Heart left ventricle (tissue), 16 donors: ENCODE measurements at regions of chr16 and their contacts with region 1.

Region 1: DNA sequence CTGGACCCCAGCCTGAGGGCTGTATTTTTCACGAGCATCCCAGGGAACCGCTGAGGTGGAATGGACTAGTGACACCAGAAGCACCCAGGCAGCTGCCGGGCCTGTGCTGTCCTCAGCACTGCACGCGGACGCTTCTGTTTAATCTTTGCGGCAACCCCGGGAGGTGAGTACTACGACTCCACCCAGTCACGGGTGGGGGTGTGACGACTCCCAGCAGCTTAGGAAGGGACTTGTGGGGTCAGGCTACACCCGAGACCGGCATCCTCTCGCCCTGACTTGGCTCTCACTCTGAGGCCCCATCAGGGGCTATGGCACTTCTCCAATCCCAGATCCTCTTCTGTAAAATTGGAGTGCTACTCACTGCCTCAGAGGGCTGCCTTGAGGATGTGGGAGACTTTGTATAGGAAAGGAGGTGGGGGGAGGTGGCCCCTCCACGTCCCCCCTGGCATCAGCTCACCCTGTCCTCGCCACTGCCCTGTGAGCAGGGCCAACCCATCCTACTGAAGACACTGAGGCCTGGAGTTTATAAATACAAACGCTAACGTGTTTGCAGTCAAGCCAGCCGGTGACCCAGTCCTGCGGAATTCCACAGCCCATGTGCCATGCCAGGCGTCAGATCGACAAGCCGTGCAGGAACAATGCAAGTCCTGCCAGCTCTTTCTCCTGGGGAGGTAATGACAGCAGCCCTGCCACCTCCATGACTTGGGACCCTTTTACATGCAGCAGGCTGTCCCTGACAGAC is 44.4 kb downstream of the PPL start:
- DNase-seq: peak in 4 of 5 donors; percentile 40 to 74 (median 64)
- ATAC-seq: peak; percentile 64 to 82 (median 69)
- H3K4me3 ChIP-seq: no peak overlapping the region
- H3K27ac ChIP-seq: peak overlapping the region in 8 of 12 donors; percentile 13 to 73 (median 52)
- H3K4me1 ChIP-seq: peaks cover 0 to 19% (median 12%) of the 10 kb centered on the region in 12 donors
- H3K27me3 ChIP-seq: no peaks in the 10 kb centered on the region
- CTCF ChIP-seq: no peak
- POLR2A ChIP-seq: no peak

Region 2: DNA sequence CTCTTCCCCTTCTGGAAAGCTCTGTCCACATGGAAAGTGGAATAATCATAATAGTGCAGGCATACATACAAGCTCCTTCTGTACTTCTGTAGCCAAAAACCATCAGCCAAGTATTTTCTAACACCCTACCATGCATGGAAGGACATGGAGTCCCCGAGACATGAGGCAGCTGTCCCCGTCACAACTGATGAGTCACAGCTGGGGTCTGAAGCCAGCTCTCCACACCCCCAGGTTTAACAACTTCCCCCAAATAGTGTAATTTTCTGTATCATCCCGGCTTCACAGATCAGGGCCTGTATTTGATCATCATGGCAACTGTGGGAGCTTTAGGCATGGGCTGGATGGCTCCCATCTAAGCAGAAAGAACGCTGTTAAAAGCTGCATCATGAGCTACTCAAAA is 319.8 kb before region 1 on chr16:
- intact Hi-C with region 1: no loop called
- DNase-seq: peak in 1 of 5 donors; percentile 39
- ATAC-seq: peak; percentile 28 to 74 (median 59)
- H3K4me3 ChIP-seq: no peak overlapping the region
- H3K27ac ChIP-seq: no peak overlapping the region
- H3K4me1 ChIP-seq: no peaks in the 10 kb centered on the region
- H3K27me3 ChIP-seq: no peaks in the 10 kb centered on the region
- CTCF ChIP-seq: no peak
- POLR2A ChIP-seq: no peak

Region 3: GRCh38 chr16:4936991-4937781 is 44.7 kb after region 1 on chr16 and contains the start of gene PPL:
- intact Hi-C with region 1: loop called in 2 of 10 experiments (anchors 5 kb)
- DNase-seq: peak; percentile 61 to 82 (median 69)
- ATAC-seq: peak; percentile 23 to 66 (median 56)
- H3K4me3 ChIP-seq: peak within 1 kb of the TSS; percentile 38 to 63 (median 52)
- H3K27ac ChIP-seq: peak within 1 kb of the TSS in 4 of 12 donors; percentile 24 to 61 (median 48)
- H3K4me1 ChIP-seq: peaks cover 0 to 29% (median 13%) of the 10 kb centered on the region in 12 donors
- H3K27me3 ChIP-seq: peaks cover 0 to 40% (median 5%) of the 10 kb centered on the region in 9 donors
- CTCF ChIP-seq: no peak
- POLR2A ChIP-seq: no peak
- total RNA-seq, gene PPL: 6.4 to 23.8 (median 8.3) TPM